K562 (cell line): ENCODE measurements at regions of chr14 and their contacts with region 1.

Region 1: GRCh38 chr14:100440187-100440631 is 117.1 kb downstream of the SLC25A47 start:
- DNase-seq: peak; percentile 62 to 79 (median 69)
- ATAC-seq: peak; percentile 94
- H3K4me3 ChIP-seq: no peak overlapping the region
- H3K27ac ChIP-seq: peak overlapping the region; percentile 65; the same call in 2 of the 3 replicates
- H3K4me1 ChIP-seq: peaks cover 29 to 40% of the 10 kb centered on the region in 2 experiments
- H3K27me3 ChIP-seq: no peaks in the 10 kb centered on the region
- CTCF ChIP-seq: peak; percentile 82 to 84 (median 83)
- EP300 ChIP-seq: no peak
- POLR2A ChIP-seq: no peak
- RAD21 ChIP-seq: peak; percentile 81 to 86

Region 2: GRCh38 chr14:100108042-100108825 is 332.0 kb before region 1 on chr14:
- CTCF ChIA-PET with region 1: no interaction called
- POLR2A ChIA-PET with region 1: no interaction called
- in situ Hi-C with region 1: no loop called
- intact Hi-C with region 1: no loop called
- DNase-seq: peak; percentile 80 to 83 (median 81)
- ATAC-seq: peak; percentile 99
- H3K4me3 ChIP-seq: no peak overlapping the region
- H3K27ac ChIP-seq: no peak overlapping the region
- H3K4me1 ChIP-seq: peaks cover 18 to 19% of the 10 kb centered on the region in 2 experiments; a peak in 4 of 5 replicates
- H3K27me3 ChIP-seq: no peaks in the 10 kb centered on the region
- CTCF ChIP-seq: peak; percentile 78 to 90 (median 85)
- EP300 ChIP-seq: no peak
- POLR2A ChIP-seq: no peak
- RAD21 ChIP-seq: peak; percentile 66 to 87

Region 3: GRCh38 chr14:100317912-100318808 is 122.0 kb before region 1 on chr14:
- CTCF ChIA-PET with region 1: no interaction called
- POLR2A ChIA-PET with region 1: no interaction called
- in situ Hi-C with region 1: no loop called
- intact Hi-C with region 1: no loop called
- DNase-seq: peak; percentile 71 to 79 (median 78)
- ATAC-seq: peak; percentile 98
- H3K4me3 ChIP-seq: no peak overlapping the region
- H3K27ac ChIP-seq: no peak overlapping the region
- H3K4me1 ChIP-seq: peaks cover 7 to 18% of the 10 kb centered on the region in 2 experiments; a peak in 3 of 5 replicates
- H3K27me3 ChIP-seq: peaks cover 0 to 8% of the 10 kb centered on the region in 2 experiments; a peak in 2 of 5 replicates
- CTCF ChIP-seq: peak; percentile 67 to 81 (median 72)
- EP300 ChIP-seq: no peak
- POLR2A ChIP-seq: no peak
- RAD21 ChIP-seq: peak; percentile 31 to 52; a peak in 3 of 4 replicates

Region 4: GRCh38 chr14:100654814-100655740 is 214.9 kb after region 1 on chr14:
- CTCF ChIA-PET with region 1: interaction called, 9 read pairs
- POLR2A ChIA-PET with region 1: no interaction called
- in situ Hi-C with region 1: no loop called
- intact Hi-C with region 1: loop called (anchors 1 kb)
- DNase-seq: peak; percentile 55 to 76 (median 70)
- ATAC-seq: peak; percentile 93
- H3K4me3 ChIP-seq: no peak overlapping the region; the same call in 1 of the 2 replicates
- H3K27ac ChIP-seq: no peak overlapping the region
- H3K4me1 ChIP-seq: peaks cover 3 to 40% of the 10 kb centered on the region in 2 experiments; a peak in 3 of 5 replicates
- H3K27me3 ChIP-seq: no peaks in the 10 kb centered on the region; a peak in 1 of 5 replicates
- CTCF ChIP-seq: peak; percentile 57 to 81 (median 68)
- EP300 ChIP-seq: no peak
- POLR2A ChIP-seq: no peak
- RAD21 ChIP-seq: peak; percentile 49 to 70